WTC11 (cell line): ENCODE measurements at regions of chr1 and their contacts with region 1.

Region 1: DNA sequence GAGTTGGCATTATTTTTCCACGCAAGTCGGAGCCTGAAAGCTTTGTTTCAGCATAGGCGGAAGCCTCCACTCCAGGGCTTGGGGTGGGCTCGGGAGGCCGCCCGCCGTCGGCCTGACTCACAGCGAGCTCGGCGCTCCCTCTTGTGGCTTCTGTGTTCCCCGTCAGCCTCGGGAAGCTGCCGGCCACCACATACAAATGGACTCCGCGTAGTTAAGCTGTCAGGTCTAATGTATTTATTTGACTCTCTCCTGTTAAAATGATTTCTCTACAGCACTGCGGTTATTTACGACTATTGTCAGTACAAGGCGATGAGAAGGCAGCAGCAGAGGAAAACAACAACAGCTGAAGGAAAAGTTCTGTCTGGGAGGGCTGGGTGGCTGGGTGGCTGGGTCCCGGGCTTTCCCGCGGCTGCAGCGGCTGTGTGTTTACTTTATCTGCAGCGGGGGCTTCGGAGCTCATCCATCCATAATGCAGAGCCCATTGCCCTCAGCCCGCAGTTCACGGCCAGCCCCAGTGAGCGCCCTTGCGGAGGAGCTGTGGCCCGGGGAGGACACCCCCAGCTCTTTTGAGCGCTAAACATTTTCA is 375.7 kb upstream of the CAMK1G start:
- DNase-seq: peak; percentile 83
- ATAC-seq: peak; percentile 91
- H3K4me3 Mint-ChIP-seq: peak overlapping the region; percentile 65
- H3K27ac Mint-ChIP-seq: no peak overlapping the region
- H3K4me1 Mint-ChIP-seq: peaks cover 24% of the 10 kb centered on the region
- H3K27me3 Mint-ChIP-seq: peaks cover 9% of the 10 kb centered on the region
- CTCF ChIP-seq: peak; percentile 50; the same call in 1 of the 2 replicates

Region 2: DNA sequence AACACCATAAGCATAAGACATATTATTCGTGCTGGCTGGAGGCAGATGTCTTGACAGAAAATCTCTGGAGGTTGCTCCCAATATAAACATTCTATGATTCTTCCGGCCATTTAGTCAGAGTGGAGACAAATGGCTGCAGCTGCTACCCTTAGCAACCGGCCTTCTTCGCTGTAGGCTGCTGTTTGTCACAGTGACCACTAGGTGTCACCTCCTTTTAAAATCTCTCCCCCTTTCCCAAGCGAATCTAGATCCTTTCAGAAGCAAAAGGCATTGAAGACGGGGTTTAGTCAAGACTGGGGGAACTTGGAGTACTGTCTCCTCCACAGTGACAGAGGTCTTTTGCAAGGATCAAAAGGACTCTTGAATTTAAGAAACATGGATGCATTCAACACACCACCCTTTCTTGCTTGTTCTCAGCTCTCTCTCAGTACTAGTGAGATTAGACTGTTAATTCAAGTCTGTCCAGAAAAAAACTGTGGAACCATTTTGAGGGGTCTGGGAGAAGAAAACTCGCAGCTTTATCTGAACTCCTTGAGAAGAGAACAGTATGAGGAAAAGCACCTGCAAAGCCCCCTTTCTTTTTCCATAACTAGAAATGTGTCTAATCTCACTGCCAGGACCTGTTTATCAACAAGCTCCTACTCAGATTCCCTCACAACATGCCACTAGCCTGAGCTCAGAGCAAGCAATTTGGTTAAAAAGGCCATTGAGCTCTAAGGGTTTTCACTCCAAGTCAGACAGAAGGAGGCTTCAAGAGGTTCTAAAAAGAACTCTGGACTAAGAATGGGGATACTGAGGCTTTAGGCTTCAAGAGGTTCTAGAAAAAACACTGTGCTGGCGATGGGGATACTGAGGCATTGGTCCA is 555.3 kb before region 1 on chr1:
- CTCF ChIA-PET with region 1: interaction called, 18 read pairs
- POLR2A ChIA-PET with region 1: no interaction called
- DNase-seq: peak; percentile 52
- ATAC-seq: peak; percentile 95
- H3K4me3 Mint-ChIP-seq: no peak overlapping the region
- H3K27ac Mint-ChIP-seq: no peak overlapping the region
- H3K4me1 Mint-ChIP-seq: peaks cover 20% of the 10 kb centered on the region
- H3K27me3 Mint-ChIP-seq: no peaks in the 10 kb centered on the region; the same call in 1 of the 2 replicates
- CTCF ChIP-seq: peak; percentile 81

Region 3: GRCh38 chr1:208880433-208881100 is 327.2 kb before region 1 on chr1:
- CTCF ChIA-PET with region 1: no interaction called
- POLR2A ChIA-PET with region 1: no interaction called
- DNase-seq: no peak
- ATAC-seq: no peak
- H3K4me3 Mint-ChIP-seq: no peak overlapping the region
- H3K27ac Mint-ChIP-seq: no peak overlapping the region
- H3K4me1 Mint-ChIP-seq: no peaks in the 10 kb centered on the region
- H3K27me3 Mint-ChIP-seq: no peaks in the 10 kb centered on the region
- CTCF ChIP-seq: no peak

Region 4: DNA sequence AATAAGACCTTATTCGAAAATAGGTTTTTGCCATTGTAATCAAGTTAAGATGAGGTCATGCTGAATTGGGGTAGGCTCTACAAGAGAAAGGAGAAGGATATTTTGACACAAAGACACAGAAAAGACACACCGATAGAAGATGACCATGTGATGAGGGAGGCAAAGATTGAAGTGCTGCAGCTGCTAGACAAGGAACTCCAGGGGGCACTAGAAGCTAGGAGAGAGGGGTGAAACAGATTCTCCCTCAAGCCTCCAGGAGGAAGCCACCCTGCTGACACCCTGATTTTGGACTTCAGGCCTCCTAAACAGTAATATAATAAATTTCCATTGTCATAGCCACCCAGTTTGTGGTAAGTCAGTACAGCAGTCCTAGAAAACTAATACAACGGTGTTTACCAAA is 131.1 kb before region 1 on chr1:
- CTCF ChIA-PET with region 1: interaction called, 21 read pairs
- POLR2A ChIA-PET with region 1: no interaction called
- DNase-seq: no peak
- ATAC-seq: peak; percentile 65
- H3K4me3 Mint-ChIP-seq: no peak overlapping the region
- H3K27ac Mint-ChIP-seq: no peak overlapping the region
- H3K4me1 Mint-ChIP-seq: peaks cover 12% of the 10 kb centered on the region
- H3K27me3 Mint-ChIP-seq: no peaks in the 10 kb centered on the region; the same call in 1 of the 2 replicates
- CTCF ChIP-seq: no peak

Region 5: GRCh38 chr1:209229494-209230059 is 21.8 kb after region 1 on chr1:
- CTCF ChIA-PET with region 1: interaction called, 20 read pairs
- POLR2A ChIA-PET with region 1: no interaction called
- DNase-seq: no peak
- ATAC-seq: no peak
- H3K4me3 Mint-ChIP-seq: no peak overlapping the region
- H3K27ac Mint-ChIP-seq: peak overlapping the region; percentile 1; the same call in 1 of the 2 replicates
- H3K4me1 Mint-ChIP-seq: peaks cover 27% of the 10 kb centered on the region
- H3K27me3 Mint-ChIP-seq: peaks cover 21% of the 10 kb centered on the region
- CTCF ChIP-seq: no peak

Region 6: GRCh38 chr1:209490013-209490412 is 282.2 kb after region 1 on chr1:
- CTCF ChIA-PET with region 1: interaction called, 22 read pairs
- POLR2A ChIA-PET with region 1: no interaction called
- DNase-seq: no peak
- ATAC-seq: peak; percentile 73; the same call in 1 of the 2 replicates
- H3K4me3 Mint-ChIP-seq: no peak overlapping the region
- H3K27ac Mint-ChIP-seq: no peak overlapping the region
- H3K4me1 Mint-ChIP-seq: peaks cover 28% of the 10 kb centered on the region
- H3K27me3 Mint-ChIP-seq: no peaks in the 10 kb centered on the region; the same call in 1 of the 2 replicates
- CTCF ChIP-seq: peak; percentile 41; the same call in 1 of the 2 replicates